Caco-2 (cell line): ENCODE measurements at regions of chr1 and their contacts with region 1.

Region 1: GRCh38 chr1:26900001-26900814 is at the start of gene GPATCH3:
- DNase-seq: peak; percentile 89 to 92
- H3K4me3 ChIP-seq: peak within 1 kb of the TSS; percentile 95
- H3K4me3 Mint-ChIP-seq: peak within 1 kb of the TSS; percentile 92
- H3K27ac Mint-ChIP-seq: peak within 1 kb of the TSS; percentile 98
- H3K4me1 ChIP-seq: 0 out of 2 replicates have a peak, but pooled peaks cover 5% of the 10 kb centered on the region
- H3K4me1 Mint-ChIP-seq: no peaks in the 10 kb centered on the region
- H3K27me3 ChIP-seq: no peaks in the 10 kb centered on the region
- H3K27me3 Mint-ChIP-seq: no peaks in the 10 kb centered on the region
- CTCF ChIP-seq: no peak
- total RNA-seq, gene GPATCH3: 19.1 and 20.6 TPM in 2 replicates

Region 2: DNA sequence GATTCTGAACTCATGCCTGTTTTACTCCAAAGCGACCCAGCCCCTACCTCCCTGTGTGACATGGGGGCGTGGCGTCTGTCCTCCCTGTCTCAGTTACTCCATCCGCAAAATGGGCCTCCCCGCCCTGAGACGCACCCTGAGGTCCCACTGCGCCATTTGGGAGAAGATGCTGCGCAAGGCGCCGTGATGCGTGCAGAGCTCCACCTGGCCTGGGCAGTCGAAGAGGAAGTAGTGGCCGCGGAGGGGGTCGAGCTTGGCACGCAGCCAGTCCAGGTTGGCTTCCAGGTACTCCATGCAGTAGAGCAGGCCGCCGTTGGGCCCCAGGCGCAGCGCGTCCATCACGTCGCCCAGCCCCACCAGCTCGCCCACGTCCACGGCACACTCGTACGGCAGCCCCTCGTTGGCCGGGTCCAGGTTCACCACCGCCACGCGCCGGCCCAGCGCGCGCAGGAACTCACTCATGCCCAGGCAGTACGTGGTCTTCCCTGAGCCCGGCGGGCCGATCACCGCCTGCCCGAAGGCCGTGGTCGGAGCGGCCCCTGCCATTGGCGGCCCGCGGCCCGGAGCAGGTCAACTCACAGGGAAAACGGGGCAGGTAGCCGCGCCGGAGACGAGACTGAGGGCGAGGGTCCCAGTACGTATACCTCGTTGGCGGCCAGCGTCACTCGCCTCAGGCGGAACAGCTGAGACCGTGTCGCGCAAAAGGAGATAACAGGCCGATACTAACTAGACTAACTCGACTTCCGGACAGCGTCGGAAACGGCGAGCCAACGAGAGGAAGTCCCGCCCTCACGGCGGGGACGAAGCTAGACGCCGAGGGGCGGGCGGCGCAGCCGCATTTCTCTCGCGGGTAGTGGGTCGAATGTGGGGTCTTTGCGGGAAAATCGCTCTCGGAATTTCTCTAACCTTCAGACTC is 10.4 kb before region 1 on chr1 and contains the start of gene GPN2:
- CTCF ChIA-PET with region 1: interaction called, 5 read pairs
- POLR2A ChIA-PET with region 1: interaction called, 23 read pairs
- intact Hi-C with region 1: no loop called
- DNase-seq: peak; percentile 69 to 73
- H3K4me3 ChIP-seq: peak within 1 kb of the TSS; percentile 96
- H3K4me3 Mint-ChIP-seq: peak within 1 kb of the TSS; percentile 88
- H3K27ac Mint-ChIP-seq: peak within 1 kb of the TSS; percentile 90
- H3K4me1 ChIP-seq: no peaks in the 10 kb centered on the region
- H3K4me1 Mint-ChIP-seq: peaks cover 11% of the 10 kb centered on the region
- H3K27me3 ChIP-seq: no peaks in the 10 kb centered on the region
- H3K27me3 Mint-ChIP-seq: no peaks in the 10 kb centered on the region
- CTCF ChIP-seq: no peak
- total RNA-seq, gene GPN2: 31.2 and 32.0 TPM in 2 replicates

Region 3: DNA sequence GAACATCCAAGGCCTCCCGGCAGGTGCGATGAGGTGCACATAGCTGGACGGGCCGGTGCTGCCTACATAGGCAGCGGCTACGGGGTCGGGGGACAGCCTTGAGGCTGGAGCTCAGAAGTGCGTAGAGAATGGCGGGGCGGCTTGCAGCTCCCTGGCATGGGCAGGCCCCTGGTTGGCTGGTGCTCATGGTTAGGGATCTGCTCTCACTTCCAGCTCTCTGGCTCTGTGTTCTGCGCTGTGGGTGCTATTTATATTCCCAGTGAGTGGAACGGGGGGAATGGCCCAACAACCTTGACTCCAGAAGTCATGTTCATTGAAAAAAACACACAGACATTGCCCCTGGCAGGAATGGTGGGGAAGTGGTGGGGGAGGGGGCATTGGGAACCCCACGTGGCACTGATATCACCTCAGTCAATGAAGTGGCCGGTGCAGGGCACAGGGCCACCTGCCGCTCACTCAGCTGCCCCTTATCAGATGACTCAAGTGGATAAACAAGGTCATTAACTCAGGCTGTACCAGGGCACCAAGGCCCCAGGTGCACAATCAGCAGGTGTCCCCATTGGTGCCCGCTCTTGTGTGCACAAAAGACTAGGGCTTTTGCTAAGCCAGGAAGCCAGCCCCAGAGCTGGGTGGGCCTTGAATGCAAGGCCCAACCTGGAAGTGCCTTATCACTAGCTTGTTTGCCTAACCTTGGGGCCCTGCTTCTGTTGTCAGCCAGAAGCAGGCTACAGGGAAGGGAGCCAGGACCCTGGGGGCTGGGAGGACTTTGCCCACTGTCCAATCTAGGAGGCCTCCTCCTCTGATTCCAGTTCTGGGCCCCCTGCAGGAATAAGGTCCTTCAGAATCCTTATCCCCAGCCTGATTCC is 13.8 kb after region 1 on chr1 and contains the start of gene NR0B2:
- CTCF ChIA-PET with region 1: interaction called, 9 read pairs
- POLR2A ChIA-PET with region 1: interaction called, 21 read pairs
- intact Hi-C with region 1: loop called (anchors 1 kb)
- DNase-seq: peak; percentile 83 to 93
- H3K4me3 ChIP-seq: no peak within 1 kb of the TSS
- H3K4me3 Mint-ChIP-seq: no peak within 1 kb of the TSS
- H3K27ac Mint-ChIP-seq: peak within 1 kb of the TSS; percentile 25
- H3K4me1 ChIP-seq: peaks cover 37% of the 10 kb centered on the region
- H3K4me1 Mint-ChIP-seq: peaks cover 15% of the 10 kb centered on the region
- H3K27me3 ChIP-seq: no peaks in the 10 kb centered on the region
- H3K27me3 Mint-ChIP-seq: no peaks in the 10 kb centered on the region
- CTCF ChIP-seq: no peak
- total RNA-seq, gene NR0B2: 0.34 TPM in 1 of 2 replicates, not detected in the other

Region 4: GRCh38 chr1:26932531-26932930 is 32.3 kb after region 1 on chr1:
- CTCF ChIA-PET with region 1: no interaction called
- POLR2A ChIA-PET with region 1: no interaction called
- intact Hi-C with region 1: no loop called
- DNase-seq: no peak
- H3K4me3 ChIP-seq: no peak overlapping the region
- H3K4me3 Mint-ChIP-seq: no peak overlapping the region
- H3K27ac Mint-ChIP-seq: no peak overlapping the region
- H3K4me1 ChIP-seq: no peaks in the 10 kb centered on the region
- H3K4me1 Mint-ChIP-seq: no peaks in the 10 kb centered on the region
- H3K27me3 ChIP-seq: no peaks in the 10 kb centered on the region
- H3K27me3 Mint-ChIP-seq: no peaks in the 10 kb centered on the region
- CTCF ChIP-seq: no peak

Region 5: GRCh38 chr1:26993237-26994019 is 93.2 kb after region 1 on chr1 and contains the start of gene TRNP1:
- CTCF ChIA-PET with region 1: no interaction called
- POLR2A ChIA-PET with region 1: interaction called, 15 read pairs
- intact Hi-C with region 1: no loop called
- DNase-seq: peak; percentile 91
- H3K4me3 ChIP-seq: peak within 1 kb of the TSS; percentile 83
- H3K4me3 Mint-ChIP-seq: peak within 1 kb of the TSS; percentile 76
- H3K27ac Mint-ChIP-seq: peak within 1 kb of the TSS; percentile 87
- H3K4me1 ChIP-seq: peaks cover 56% of the 10 kb centered on the region
- H3K4me1 Mint-ChIP-seq: peaks cover 17% of the 10 kb centered on the region
- H3K27me3 ChIP-seq: no peaks in the 10 kb centered on the region
- H3K27me3 Mint-ChIP-seq: no peaks in the 10 kb centered on the region
- CTCF ChIP-seq: no peak
- total RNA-seq, gene TRNP1: 23.3 and 23.6 TPM in 2 replicates